CD4-positive, alpha-beta memory T cell (primary cell): ENCODE measurements at regions of chr2 and their contacts with region 1.

Region 1: GRCh38 chr2:204108330-204108751 is 171.8 kb downstream of the ICOS start:
- DNase-seq: peak; percentile 56 to 67 (median 61)
- H3K4me3 ChIP-seq: no peak overlapping the region
- H3K4me3 Mint-ChIP-seq: peak overlapping the region; percentile 28 to 94 (median 86)
- H3K27ac ChIP-seq: no peak overlapping the region
- H3K27ac Mint-ChIP-seq: peak overlapping the region; percentile 15 to 89 (median 64)
- H3K4me1 ChIP-seq: peaks cover 30% of the 10 kb centered on the region
- H3K4me1 Mint-ChIP-seq: peaks cover 29 to 47% (median 39%) of the 10 kb centered on the region in 4 donors
- H3K27me3 ChIP-seq: no peaks in the 10 kb centered on the region
- H3K27me3 Mint-ChIP-seq: no peaks in the 10 kb centered on the region

Region 2: DNA sequence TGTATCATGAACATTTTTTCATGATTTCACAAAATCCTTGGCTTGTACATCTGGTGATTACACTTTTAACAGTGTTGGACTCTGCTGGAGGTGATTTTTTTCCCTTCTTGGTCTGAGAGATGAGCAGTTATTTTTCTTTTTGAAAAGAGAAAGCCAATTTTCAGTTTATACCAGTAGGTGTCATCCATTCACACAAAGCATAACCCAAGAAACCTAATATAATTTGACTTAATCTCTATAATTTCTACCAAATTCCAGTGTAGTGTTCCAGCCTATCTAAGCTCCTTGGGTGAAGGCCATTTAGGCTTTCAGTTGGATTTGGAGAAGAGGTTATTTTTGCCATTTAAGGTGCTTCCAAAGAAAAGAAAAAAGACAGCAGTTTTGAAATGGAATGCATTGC is 179.5 kb before region 1 on chr2:
- CTCF ChIA-PET with region 1: interaction called, 4 read pairs
- POLR2A ChIA-PET with region 1: no interaction called
- intact Hi-C with region 1: loop called (anchors 1 kb)
- DNase-seq: peak in 1 of 5 donors; percentile 45
- H3K4me3 ChIP-seq: no peak overlapping the region
- H3K4me3 Mint-ChIP-seq: no peak overlapping the region
- H3K27ac ChIP-seq: no peak overlapping the region
- H3K27ac Mint-ChIP-seq: peak overlapping the region in 1 of 7 donors; percentile 22
- H3K4me1 ChIP-seq: peaks cover 20% of the 10 kb centered on the region
- H3K4me1 Mint-ChIP-seq: peaks cover 15 to 41% (median 31%) of the 10 kb centered on the region in 4 donors
- H3K27me3 ChIP-seq: no peaks in the 10 kb centered on the region
- H3K27me3 Mint-ChIP-seq: peaks cover 1 to 2% of the 10 kb centered on the region in 2 donors

Region 3: DNA sequence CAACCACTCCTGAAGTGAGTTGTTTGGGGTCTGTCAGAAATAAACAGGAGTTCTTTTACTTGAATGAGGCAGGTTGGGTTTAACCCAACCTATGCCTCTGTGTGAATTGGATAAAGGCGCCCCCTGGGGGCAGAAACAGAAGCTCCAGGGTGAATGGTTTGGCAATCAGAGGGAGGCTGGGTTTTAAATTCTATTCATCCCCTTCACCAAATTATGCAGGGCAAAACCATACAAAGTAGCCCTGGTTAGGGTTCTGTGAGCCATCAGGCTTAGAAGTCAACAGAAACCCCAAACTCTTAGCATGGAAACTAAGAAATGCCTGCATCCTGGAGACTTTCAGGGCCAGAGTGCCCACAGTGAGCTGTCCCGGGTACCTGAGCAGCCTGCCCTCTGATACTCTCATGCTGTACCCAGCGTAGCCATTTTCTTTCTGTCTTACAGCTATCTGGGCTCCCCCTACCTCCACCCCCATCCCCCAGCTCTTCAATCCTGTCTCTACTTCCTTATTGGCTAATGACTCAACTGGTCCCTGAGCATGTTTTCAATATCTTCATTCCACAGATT is 69.7 kb after region 1 on chr2:
- CTCF ChIA-PET with region 1: interaction called, 187 read pairs
- POLR2A ChIA-PET with region 1: interaction called, 3 read pairs
- intact Hi-C with region 1: loop called (anchors 1 kb)
- DNase-seq: peak; percentile 55 to 65 (median 63)
- H3K4me3 ChIP-seq: no peak overlapping the region
- H3K4me3 Mint-ChIP-seq: no peak overlapping the region
- H3K27ac ChIP-seq: no peak overlapping the region
- H3K27ac Mint-ChIP-seq: no peak overlapping the region
- H3K4me1 ChIP-seq: no peaks in the 10 kb centered on the region
- H3K4me1 Mint-ChIP-seq: no peaks in the 10 kb centered on the region
- H3K27me3 ChIP-seq: no peaks in the 10 kb centered on the region
- H3K27me3 Mint-ChIP-seq: peaks cover 7 to 10% of the 10 kb centered on the region in 2 donors

Region 4: DNA sequence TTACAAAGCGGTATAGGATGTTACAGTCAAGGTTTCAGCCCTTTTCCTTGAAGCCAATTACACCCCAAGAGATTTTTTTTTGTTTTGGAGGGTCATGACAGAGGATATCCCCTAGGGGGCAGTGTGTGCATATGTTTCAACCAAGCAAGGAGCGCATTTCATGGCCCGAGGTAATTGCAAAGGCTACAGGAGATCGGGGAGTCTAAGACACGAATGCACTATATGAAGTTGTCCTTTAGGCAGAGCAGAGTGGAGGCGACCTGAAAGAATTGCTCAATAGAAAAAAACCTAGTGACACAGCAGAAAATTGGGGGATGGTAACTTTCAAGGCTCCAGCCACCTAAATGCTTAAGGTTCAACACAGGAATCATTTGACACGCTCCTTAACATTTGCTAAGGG is 217.1 kb after region 1 on chr2:
- CTCF ChIA-PET with region 1: no interaction called
- POLR2A ChIA-PET with region 1: no interaction called
- intact Hi-C with region 1: loop called (anchors 1 kb)
- DNase-seq: peak; percentile 47 to 69 (median 68)
- H3K4me3 ChIP-seq: no peak overlapping the region
- H3K4me3 Mint-ChIP-seq: no peak overlapping the region
- H3K27ac ChIP-seq: no peak overlapping the region
- H3K27ac Mint-ChIP-seq: peak overlapping the region in 1 of 7 donors; percentile 50
- H3K4me1 ChIP-seq: no peaks in the 10 kb centered on the region
- H3K4me1 Mint-ChIP-seq: peaks cover 0 to 2% (median under 1%) of the 10 kb centered on the region in 4 donors
- H3K27me3 ChIP-seq: no peaks in the 10 kb centered on the region
- H3K27me3 Mint-ChIP-seq: peaks cover 2 to 15% of the 10 kb centered on the region in 2 donors

Region 5: GRCh38 chr2:204871231-204871953 is 763.1 kb after region 1 on chr2:
- CTCF ChIA-PET with region 1: no interaction called
- POLR2A ChIA-PET with region 1: no interaction called
- intact Hi-C with region 1: loop called (anchors 2 kb)
- DNase-seq: peak in 4 of 5 donors; percentile 37 to 53 (median 44)
- H3K4me3 ChIP-seq: no peak overlapping the region
- H3K4me3 Mint-ChIP-seq: peak overlapping the region in 5 of 8 donors; percentile 0 to 70 (median 1)
- H3K27ac ChIP-seq: no peak overlapping the region
- H3K27ac Mint-ChIP-seq: peak overlapping the region in 2 of 7 donors; percentile 5 to 29
- H3K4me1 ChIP-seq: peaks cover 15% of the 10 kb centered on the region
- H3K4me1 Mint-ChIP-seq: peaks cover 11 to 30% (median 22%) of the 10 kb centered on the region in 4 donors
- H3K27me3 ChIP-seq: no peaks in the 10 kb centered on the region
- H3K27me3 Mint-ChIP-seq: no peaks in the 10 kb centered on the region

Region 6: GRCh38 chr2:205766779-205767359 is 1658.5 kb after region 1 on chr2:
- CTCF ChIA-PET with region 1: no interaction called
- POLR2A ChIA-PET with region 1: no interaction called
- intact Hi-C with region 1: loop called (anchors 2 kb)
- DNase-seq: peak in 4 of 5 donors; percentile 13 to 32 (median 22)
- H3K4me3 ChIP-seq: no peak overlapping the region
- H3K4me3 Mint-ChIP-seq: peak overlapping the region in 1 of 8 donors; percentile 17
- H3K27ac ChIP-seq: no peak overlapping the region
- H3K27ac Mint-ChIP-seq: peak overlapping the region in 1 of 7 donors; percentile 23
- H3K4me1 ChIP-seq: no peaks in the 10 kb centered on the region
- H3K4me1 Mint-ChIP-seq: peaks cover 0 to 15% (median 3%) of the 10 kb centered on the region in 4 donors
- H3K27me3 ChIP-seq: no peaks in the 10 kb centered on the region
- H3K27me3 Mint-ChIP-seq: peaks cover 27 to 35% of the 10 kb centered on the region in 2 donors